ENCODE measurements at regions of chr11 and their contacts with region 1.

Region 1: GRCh38 chr11:129911298-129911697 is 15.9 kb upstream of the NFRKB start:
- DNase-seq: no peak
- H3K4me3 ChIP-seq: no peak overlapping the region
- H3K27ac ChIP-seq: peak overlapping the region in 1 of 2 experiments; percentile 36
- H3K4me1 ChIP-seq: peaks cover 0 to 9% (median 3%) of the 10 kb centered on the region in 4 experiments
- H3K27me3 ChIP-seq: no peaks in the 10 kb centered on the region

Region 2: GRCh38 chr11:129922674-129923073 is 11.4 kb after region 1 on chr11:
- CTCF ChIA-PET with region 1: interaction called, 29 read pairs
- POLR2A ChIA-PET with region 1: no interaction called
- DNase-seq: peak in 2 of 3 donors; percentile 30 to 34
- H3K4me3 ChIP-seq: no peak overlapping the region
- H3K27ac ChIP-seq: no peak overlapping the region
- H3K4me1 ChIP-seq: peaks cover 3 to 29% (median 9%) of the 10 kb centered on the region in 4 experiments
- H3K27me3 ChIP-seq: no peaks in the 10 kb centered on the region

Measured in common myeloid progenitor, CD34-positive (primary cell).